ENCODE measurements at regions of chr1 and their contacts with region 1.

Region 1: DNA sequence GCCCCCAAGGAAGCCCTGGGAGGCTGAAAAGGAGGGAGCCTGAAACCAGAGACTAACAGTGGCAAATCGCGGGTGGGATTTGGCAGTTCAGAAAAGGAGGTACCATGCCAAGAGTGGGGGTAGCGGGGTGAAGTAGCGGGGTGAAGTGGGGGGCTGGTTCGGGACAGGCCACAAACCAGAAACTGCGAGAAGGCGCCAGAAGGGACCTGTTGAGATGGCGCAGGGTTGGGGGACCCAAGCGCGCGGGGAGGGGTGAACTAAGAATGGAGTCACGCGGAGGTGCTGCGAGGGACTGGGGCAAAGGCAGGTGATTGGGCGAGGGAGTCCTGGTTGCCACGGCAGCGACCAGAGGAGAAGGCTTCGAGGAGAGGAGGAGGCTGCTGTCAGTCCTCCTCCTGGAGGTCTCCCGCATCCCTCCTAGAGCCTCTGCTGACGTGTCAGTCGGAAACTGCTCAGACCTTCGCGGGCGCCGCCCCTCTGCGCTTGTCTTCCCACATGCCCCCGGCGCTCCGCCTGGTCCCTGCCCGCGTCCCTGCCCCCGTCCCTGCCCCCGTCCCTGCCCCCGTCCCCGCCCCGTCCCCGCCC is 438 bp upstream of the MIA3 start:
- DNase-seq: peak; percentile 98
- H3K4me3 ChIP-seq: peak overlapping the region; percentile 35 to 100 (median 98)
- H3K27ac ChIP-seq: peak overlapping the region; percentile 73 to 83 (median 80)
- H3K4me1 ChIP-seq: peaks cover 0 to 20% (median 15%) of the 10 kb centered on the region in 4 donors
- H3K27me3 ChIP-seq: no peaks in the 10 kb centered on the region
- CTCF ChIP-seq: no peak
- EP300 ChIP-seq: no peak
- POLR2A ChIP-seq: peak; percentile 11 to 21

Region 2: DNA sequence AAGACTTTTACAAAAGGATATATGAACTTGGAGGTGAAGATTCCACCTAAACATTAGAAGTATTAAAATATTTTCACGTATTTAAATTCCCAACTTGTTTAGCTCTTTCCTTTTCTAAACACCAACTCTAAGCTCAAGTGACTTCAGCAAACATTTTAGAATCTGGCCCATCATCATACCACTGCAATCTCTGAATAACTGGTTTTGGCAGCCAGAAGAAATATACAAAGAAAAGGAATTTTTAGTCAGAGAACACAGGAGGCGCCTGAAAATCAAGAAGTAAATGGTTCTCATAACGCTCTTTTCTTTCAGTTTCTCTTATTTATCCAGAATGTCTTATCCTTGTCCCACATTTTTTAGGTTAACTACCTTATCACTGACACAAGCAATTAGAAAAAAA is 38.1 kb before region 1 on chr1:
- intact Hi-C with region 1: no loop called
- DNase-seq: no peak
- H3K4me3 ChIP-seq: no peak overlapping the region
- H3K27ac ChIP-seq: no peak overlapping the region
- H3K4me1 ChIP-seq: no peaks in the 10 kb centered on the region
- H3K27me3 ChIP-seq: no peaks in the 10 kb centered on the region
- CTCF ChIP-seq: no peak
- EP300 ChIP-seq: no peak
- POLR2A ChIP-seq: no peak

Region 3: DNA sequence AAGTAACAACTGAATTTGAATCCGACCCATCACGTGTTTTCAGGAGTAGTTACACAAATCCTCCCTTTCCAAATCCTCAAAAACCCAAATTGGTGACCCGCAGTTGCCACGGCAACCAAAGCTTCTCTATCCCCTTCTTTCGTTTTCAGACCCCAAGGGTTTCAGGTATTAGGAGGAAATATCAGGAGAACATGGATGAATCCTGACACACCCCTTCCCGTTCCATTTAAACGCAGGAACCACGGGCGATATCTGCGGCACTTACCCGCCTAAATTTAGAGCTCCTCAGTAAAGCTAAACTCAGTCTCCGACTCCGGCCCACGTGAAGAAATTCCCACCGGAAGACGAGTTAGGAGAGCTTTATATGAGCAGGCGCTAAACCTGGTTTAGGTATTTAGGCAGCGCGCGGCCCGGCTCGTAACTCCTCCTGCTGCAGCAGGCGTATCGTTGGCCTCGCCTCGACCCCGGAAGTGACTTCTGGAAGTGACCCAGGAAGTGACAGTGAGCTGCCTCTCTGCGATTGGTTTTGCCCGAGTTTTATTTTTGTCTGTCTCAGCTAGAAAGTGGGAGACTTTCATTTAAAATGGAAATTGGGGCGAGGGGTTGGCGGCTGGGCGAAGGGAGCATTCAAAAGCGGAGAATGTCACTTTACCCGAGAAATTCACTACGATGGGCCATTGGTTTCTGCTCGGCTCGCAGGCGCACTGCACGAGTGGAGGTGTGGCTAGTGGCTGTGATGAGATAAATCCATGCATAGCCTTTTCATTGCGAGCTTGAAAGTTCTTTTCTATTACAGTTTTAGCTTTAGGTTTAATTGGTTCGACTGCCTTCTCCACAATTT is 27.8 kb before region 1 on chr1 and contains the start of gene TAF1A:
- intact Hi-C with region 1: loop called (anchors 2 kb)
- DNase-seq: peak; percentile 94
- H3K4me3 ChIP-seq: peak within 1 kb of the TSS; percentile 59 to 70 (median 62)
- H3K27ac ChIP-seq: peak within 1 kb of the TSS; percentile 76 to 82 (median 80)
- H3K4me1 ChIP-seq: peaks cover 0 to 20% (median 16%) of the 10 kb centered on the region in 4 donors
- H3K27me3 ChIP-seq: no peaks in the 10 kb centered on the region
- CTCF ChIP-seq: no peak
- EP300 ChIP-seq: no peak
- POLR2A ChIP-seq: no peak
- total RNA-seq, gene TAF1A: 2.3 to 7.2 (median 4.8) TPM

Region 4: DNA sequence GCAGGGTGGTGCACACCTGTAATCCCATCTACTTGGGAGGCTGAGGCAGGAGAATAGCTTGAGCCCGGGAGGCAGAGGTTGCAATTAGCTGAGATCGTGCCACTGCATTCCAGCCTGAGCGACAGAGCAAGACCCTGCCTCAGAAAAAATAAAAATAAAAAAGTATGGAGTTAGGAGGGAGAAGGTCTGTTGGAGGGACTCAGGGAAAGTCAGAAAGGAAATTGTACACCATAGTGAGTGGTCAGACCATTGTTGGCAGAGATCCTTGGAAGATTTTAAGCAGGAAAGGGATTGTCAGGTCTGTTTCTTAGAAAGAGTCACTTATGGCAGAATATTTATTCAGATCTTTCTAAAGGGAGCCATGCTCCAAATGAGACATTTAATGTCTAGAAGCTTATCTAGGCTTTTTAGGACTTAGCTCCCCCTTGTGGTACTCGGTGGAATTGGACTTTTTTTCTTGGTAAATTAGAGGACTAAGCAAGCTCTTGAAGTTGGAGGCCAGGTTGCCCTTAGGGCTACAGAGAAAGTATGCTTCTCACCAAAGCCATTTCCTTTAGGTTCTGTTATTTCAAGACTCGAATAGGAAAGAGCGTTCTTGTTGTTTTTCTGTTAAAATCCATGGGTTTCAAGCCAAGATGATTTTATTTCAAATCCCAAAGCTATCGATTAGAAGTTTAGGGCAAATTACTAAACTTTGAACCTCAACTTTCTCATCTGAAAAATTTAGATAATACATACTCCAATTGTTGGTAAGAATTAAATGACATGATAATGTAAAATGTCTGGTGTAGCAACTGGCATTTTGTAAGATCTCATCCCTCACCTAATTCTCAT is 16.9 kb after region 1 on chr1:
- intact Hi-C with region 1: loop called (anchors 1 kb)
- DNase-seq: peak; percentile 74
- H3K4me3 ChIP-seq: no peak overlapping the region
- H3K27ac ChIP-seq: peak overlapping the region in 1 of 4 donors; percentile 2
- H3K4me1 ChIP-seq: no peaks in the 10 kb centered on the region
- H3K27me3 ChIP-seq: no peaks in the 10 kb centered on the region
- CTCF ChIP-seq: peak; percentile 74 to 88 (median 80)
- EP300 ChIP-seq: no peak
- POLR2A ChIP-seq: no peak

Region 5: DNA sequence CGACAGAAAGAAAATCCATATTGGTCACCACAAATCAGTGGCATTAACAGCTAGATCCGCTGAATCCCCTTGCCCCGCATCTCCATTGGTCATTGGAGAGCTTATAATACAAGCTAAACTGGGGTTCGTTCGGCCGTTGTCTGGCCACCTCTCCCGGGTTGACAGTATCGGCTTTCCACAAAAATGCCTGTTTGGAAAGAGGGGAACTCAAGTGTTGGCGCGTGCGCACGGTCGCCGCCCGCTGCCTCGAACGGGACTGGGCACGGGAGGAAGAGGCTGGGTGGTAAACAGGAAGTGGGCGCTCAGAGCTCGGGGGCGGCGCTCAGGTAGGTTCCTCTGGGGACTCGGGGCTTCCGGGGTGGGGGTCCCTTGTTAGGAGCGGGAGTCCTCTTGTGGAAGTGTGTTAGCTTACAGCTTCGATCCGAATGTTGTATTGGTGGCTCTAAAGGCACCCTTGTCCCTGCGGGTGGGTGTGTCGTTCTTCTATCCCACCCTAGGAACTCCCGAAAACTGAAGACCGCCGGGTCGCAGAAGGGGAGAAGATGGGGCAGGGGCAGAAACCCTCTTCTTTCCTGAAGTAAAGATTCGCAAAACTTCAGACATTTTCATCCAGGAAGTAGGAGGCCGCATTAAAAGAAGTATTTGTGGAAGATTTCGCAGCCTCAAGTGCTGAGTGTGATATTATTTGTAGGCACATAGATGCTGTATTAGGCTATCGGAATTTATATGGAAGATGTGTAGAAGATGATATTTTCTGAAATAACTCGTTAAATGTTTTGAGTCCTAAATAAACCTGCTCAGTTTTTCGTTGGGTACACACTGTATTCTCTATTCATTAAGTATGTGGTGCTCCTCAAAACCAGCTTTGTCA is 95.9 kb after region 1 on chr1:
- intact Hi-C with region 1: loop called (anchors 2 kb)
- DNase-seq: peak; percentile 97
- H3K4me3 ChIP-seq: peak overlapping the region; percentile 60 to 88 (median 69)
- H3K27ac ChIP-seq: peak overlapping the region; percentile 88 to 98 (median 92)
- H3K4me1 ChIP-seq: peaks cover 0 to 42% (median 28%) of the 10 kb centered on the region in 4 donors
- H3K27me3 ChIP-seq: no peaks in the 10 kb centered on the region
- CTCF ChIP-seq: no peak
- EP300 ChIP-seq: no peak
- POLR2A ChIP-seq: no peak

Region 6: DNA sequence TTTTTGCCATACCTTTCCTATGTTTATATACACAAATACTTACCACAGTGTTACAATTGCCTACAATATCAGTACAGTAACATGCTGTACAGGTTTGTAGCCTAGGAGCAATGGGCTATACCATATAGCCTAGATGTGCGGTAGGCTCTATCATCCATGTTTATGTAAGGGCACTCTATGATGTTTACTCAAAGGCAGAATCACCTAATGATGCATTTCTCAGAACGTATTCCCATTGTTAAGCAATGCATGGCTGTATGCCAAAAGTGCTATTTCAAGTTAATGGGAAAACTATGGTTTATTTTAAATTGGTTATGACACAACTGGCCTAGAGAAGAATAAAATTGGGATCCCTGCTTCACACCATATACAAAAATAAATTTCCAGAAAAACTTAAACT is 160.5 kb after region 1 on chr1:
- intact Hi-C with region 1: no loop called
- DNase-seq: no peak
- H3K4me3 ChIP-seq: no peak overlapping the region
- H3K27ac ChIP-seq: peak overlapping the region in 2 of 4 donors; percentile 6 to 44
- H3K4me1 ChIP-seq: peaks cover 0 to 12% (median 9%) of the 10 kb centered on the region in 4 donors
- H3K27me3 ChIP-seq: no peaks in the 10 kb centered on the region
- CTCF ChIP-seq: no peak
- EP300 ChIP-seq: peak in 3 of 4 donors; percentile 27 to 89 (median 37)
- POLR2A ChIP-seq: no peak